Psoas muscle (tissue), 8 donors: ENCODE measurements at regions of chr2 and their contacts with region 1.

Region 1: DNA sequence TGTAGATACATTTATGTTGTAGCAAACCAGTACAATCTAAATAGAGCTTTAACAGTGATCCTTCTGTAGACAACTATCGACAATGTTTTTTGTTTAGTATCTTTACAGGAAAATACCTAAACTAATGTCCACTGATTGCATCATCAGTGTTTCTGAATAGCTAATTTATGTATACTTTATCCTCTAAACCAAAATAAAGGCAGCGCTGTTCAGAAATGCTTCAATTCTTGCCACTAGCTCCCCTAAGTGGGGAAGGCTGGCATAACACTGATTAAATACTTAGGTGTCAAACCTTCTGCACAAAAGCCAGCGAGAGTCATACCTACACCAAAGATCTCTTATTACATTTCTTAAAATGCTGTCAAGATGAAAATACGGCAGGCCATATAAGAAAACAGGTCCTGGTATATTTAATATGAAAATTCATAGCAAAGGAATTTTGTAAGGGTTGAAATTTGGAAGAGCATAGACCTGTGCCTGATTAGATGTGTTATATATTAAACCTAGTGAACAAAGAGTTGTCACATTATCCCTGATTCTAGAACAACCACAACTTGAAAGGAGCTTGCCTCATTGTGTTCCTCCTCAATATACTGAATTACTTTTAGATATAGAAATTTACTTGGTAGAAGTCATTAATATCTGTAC is 1693.4 kb upstream of the SLC39A10 start:
- DNase-seq: no peak
- ATAC-seq: no peak
- H3K4me3 ChIP-seq: no peak overlapping the region
- H3K27ac ChIP-seq: no peak overlapping the region
- H3K4me1 ChIP-seq: no peaks in the 10 kb centered on the region
- H3K27me3 ChIP-seq: no peaks in the 10 kb centered on the region
- CTCF ChIP-seq: no peak

Region 2: GRCh38 chr2:193980599-193980998 is 17.0 kb after region 1 on chr2:
- intact Hi-C with region 1: loop called in 1 of 2 experiments (anchors 1 kb)
- DNase-seq: no peak
- ATAC-seq: no peak
- H3K4me3 ChIP-seq: no peak overlapping the region
- H3K27ac ChIP-seq: no peak overlapping the region
- H3K4me1 ChIP-seq: no peaks in the 10 kb centered on the region
- H3K27me3 ChIP-seq: no peaks in the 10 kb centered on the region
- CTCF ChIP-seq: no peak